ENCODE measurements at regions of chr19 and their contacts with region 1.

Region 1: DNA sequence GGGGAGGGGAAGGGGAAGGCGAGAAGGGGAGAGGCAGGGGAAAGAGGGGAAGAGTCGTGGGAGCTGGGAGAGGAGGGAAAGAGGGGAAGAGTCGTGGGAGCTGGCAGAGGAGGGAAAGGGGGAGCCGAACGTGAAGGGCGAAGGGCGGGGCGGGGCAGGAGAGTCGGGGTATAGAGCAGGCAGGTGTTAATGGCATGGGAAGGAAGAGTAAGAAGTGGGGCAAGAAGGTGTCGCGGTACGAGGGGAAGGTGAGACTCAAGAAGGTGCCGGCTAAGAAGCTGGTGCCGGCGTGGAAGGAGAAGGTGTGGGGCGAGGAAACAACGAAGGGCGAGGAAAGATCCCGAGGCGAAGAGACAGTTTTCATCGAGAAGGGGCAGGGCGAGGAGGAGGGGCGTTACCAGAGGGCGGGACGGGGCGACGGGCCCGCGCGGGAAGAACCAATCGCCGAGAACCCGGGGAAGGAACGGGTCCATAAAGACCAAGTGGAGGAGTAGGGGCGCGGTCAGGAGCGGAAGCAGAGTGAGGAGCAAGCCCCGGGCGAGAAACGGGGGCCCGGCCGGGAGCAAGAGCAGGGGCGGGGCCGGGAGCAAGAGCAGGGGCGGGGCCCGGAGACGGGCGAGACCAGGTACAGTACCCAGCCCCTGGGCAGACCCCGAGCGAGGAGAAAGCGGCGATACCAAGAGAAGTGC is 463 bp downstream of the CATSPERG start:
- DNase-seq: peak; percentile 85 to 97 (median 92)
- ATAC-seq: peak; percentile 63
- H3K4me3 ChIP-seq: peak overlapping the region; percentile 95
- H3K4me3 Mint-ChIP-seq: peak overlapping the region; percentile 93
- H3K27ac ChIP-seq: peak overlapping the region; percentile 84 to 97
- H3K27ac Mint-ChIP-seq: peak overlapping the region; percentile 96
- H3K4me1 ChIP-seq: peaks cover 27% of the 10 kb centered on the region
- H3K4me1 Mint-ChIP-seq: peaks cover 24% of the 10 kb centered on the region
- H3K27me3 ChIP-seq: no peaks in the 10 kb centered on the region
- H3K27me3 Mint-ChIP-seq: no peaks in the 10 kb centered on the region
- CTCF ChIP-seq: no peak

Region 2: GRCh38 chr19:37899966-37900365 is 436.1 kb before region 1 on chr19:
- CTCF ChIA-PET with region 1: interaction called, 8 read pairs
- POLR2A ChIA-PET with region 1: no interaction called
- intact Hi-C with region 1: loop called (anchors 1 to 2 kb)
- DNase-seq: no peak
- ATAC-seq: no peak
- H3K4me3 ChIP-seq: no peak overlapping the region
- H3K4me3 Mint-ChIP-seq: no peak overlapping the region
- H3K27ac ChIP-seq: no peak overlapping the region
- H3K27ac Mint-ChIP-seq: no peak overlapping the region
- H3K4me1 ChIP-seq: no peaks in the 10 kb centered on the region
- H3K4me1 Mint-ChIP-seq: peaks cover 5% of the 10 kb centered on the region
- H3K27me3 ChIP-seq: no peaks in the 10 kb centered on the region
- H3K27me3 Mint-ChIP-seq: no peaks in the 10 kb centered on the region
- CTCF ChIP-seq: no peak

Region 3: GRCh38 chr19:38095411-38096308 is 240.4 kb before region 1 on chr19:
- CTCF ChIA-PET with region 1: no interaction called
- POLR2A ChIA-PET with region 1: no interaction called
- intact Hi-C with region 1: loop called in 1 of 2 experiments (anchors 1 kb)
- DNase-seq: peak; percentile 24 to 73 (median 46)
- ATAC-seq: peak; percentile 51
- H3K4me3 ChIP-seq: no peak overlapping the region
- H3K4me3 Mint-ChIP-seq: no peak overlapping the region
- H3K27ac ChIP-seq: no peak overlapping the region
- H3K27ac Mint-ChIP-seq: no peak overlapping the region
- H3K4me1 ChIP-seq: no peaks in the 10 kb centered on the region
- H3K4me1 Mint-ChIP-seq: peaks cover 8% of the 10 kb centered on the region
- H3K27me3 ChIP-seq: no peaks in the 10 kb centered on the region
- H3K27me3 Mint-ChIP-seq: no peaks in the 10 kb centered on the region
- CTCF ChIP-seq: peak; percentile 75

Region 4: DNA sequence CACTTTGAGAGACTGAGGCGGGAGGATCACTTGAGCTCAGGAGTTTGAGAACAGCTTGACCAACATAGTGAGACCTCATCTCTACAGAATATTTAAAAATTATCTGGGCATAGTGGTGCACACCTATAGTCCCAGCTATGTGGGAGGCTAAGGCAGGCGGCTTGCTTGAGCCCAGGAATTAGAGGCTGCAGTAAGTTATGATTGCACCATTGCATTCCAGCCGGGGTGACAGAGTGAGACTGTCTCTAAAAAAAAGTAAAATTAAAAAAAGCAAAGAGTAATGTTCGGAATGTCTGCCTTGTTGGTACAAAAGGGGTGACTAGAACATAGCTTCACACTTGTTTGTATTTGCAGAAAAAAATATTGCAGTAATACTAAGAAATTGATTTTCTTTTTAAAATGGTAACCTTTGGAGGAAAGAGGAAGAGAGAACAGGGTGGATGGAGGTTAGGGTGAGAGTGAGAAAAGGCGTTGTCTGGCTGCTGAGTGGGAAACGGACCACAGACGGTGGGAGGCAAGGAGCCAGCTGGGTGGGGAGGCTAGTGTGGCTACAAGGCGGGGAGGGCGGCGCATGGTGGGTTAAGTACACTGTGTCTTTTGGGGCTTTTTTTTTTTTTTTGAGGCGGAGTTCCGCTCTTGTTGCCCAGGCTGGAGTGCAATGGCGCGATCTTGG is 90.1 kb before region 1 on chr19:
- CTCF ChIA-PET with region 1: interaction called, 10 read pairs
- POLR2A ChIA-PET with region 1: interaction called, 3 read pairs
- intact Hi-C with region 1: loop called (anchors 1 kb)
- DNase-seq: no peak
- ATAC-seq: no peak
- H3K4me3 ChIP-seq: no peak overlapping the region
- H3K4me3 Mint-ChIP-seq: no peak overlapping the region
- H3K27ac ChIP-seq: no peak overlapping the region
- H3K27ac Mint-ChIP-seq: no peak overlapping the region
- H3K4me1 ChIP-seq: peaks cover 7% of the 10 kb centered on the region
- H3K4me1 Mint-ChIP-seq: peaks cover 4% of the 10 kb centered on the region
- H3K27me3 ChIP-seq: peaks cover 0 to 2% of the 10 kb centered on the region in 2 experiments
- H3K27me3 Mint-ChIP-seq: no peaks in the 10 kb centered on the region
- CTCF ChIP-seq: no peak

Region 5: GRCh38 chr19:38315657-38316476 is 20.2 kb before region 1 on chr19 and contains the start of gene YIF1B:
- CTCF ChIA-PET with region 1: interaction called, 3 read pairs
- POLR2A ChIA-PET with region 1: interaction called, 5 read pairs
- intact Hi-C with region 1: loop called (anchors 1 kb)
- DNase-seq: peak; percentile 90 to 98 (median 94)
- ATAC-seq: peak; percentile 90
- H3K4me3 ChIP-seq: peak within 1 kb of the TSS; percentile 76
- H3K4me3 Mint-ChIP-seq: peak within 1 kb of the TSS; percentile 90
- H3K27ac ChIP-seq: peak within 1 kb of the TSS; percentile 79 to 88
- H3K27ac Mint-ChIP-seq: peak within 1 kb of the TSS; percentile 88
- H3K4me1 ChIP-seq: peaks cover 51% of the 10 kb centered on the region
- H3K4me1 Mint-ChIP-seq: peaks cover 45% of the 10 kb centered on the region
- H3K27me3 ChIP-seq: no peaks in the 10 kb centered on the region
- H3K27me3 Mint-ChIP-seq: no peaks in the 10 kb centered on the region
- CTCF ChIP-seq: no peak
- total RNA-seq, gene YIF1B: 15.9 to 17.1 TPM

Region 6: DNA sequence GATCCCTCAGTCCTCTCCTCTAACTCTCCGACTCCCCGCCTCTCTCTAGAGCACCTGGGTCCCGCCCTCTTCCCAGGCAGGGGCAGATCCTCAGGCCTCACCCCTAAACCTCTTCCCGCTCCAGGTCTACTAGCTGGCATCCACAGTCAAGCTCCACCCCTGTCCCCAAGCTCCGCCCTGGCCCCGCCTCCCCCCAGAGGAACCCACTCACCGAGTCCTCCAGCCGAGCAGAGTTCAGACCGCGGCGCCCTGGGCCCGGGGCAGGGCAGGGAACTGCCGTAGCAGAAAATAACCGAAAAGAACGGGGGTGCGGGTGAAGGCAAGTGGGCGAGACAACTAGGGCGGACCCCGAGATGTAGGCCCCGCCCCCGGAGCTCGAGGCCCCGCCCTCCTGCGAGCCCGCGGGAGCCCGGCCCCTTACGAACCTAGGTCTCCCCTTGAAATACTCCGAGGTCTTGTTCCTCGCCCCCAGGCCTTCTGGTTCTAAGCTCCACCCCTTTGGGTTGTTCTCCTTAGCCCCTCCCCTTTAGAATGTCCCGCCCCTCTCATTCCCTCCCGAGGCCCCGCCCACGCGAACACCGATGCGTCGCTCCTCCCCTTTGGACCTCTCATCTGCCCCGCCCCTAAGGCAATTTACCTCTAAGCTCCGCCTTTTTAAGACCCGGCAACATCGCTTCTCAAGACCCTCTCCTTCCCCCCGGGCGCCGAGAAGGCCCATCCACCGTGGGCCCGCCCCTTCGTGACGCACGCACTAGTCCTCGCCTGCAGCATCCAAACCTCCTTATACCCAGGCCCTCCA is 51.7 kb after region 1 on chr19 and contains the start of gene GGN:
- CTCF ChIA-PET with region 1: interaction called, 11 read pairs
- POLR2A ChIA-PET with region 1: interaction called, 3 read pairs
- intact Hi-C with region 1: loop called in 1 of 2 experiments (anchors 5 kb)
- DNase-seq: peak; percentile 59 to 91 (median 75)
- ATAC-seq: peak; percentile 74
- H3K4me3 ChIP-seq: peak within 1 kb of the TSS; percentile 58
- H3K4me3 Mint-ChIP-seq: peak within 1 kb of the TSS; percentile 94
- H3K27ac ChIP-seq: no peak within 1 kb of the TSS
- H3K27ac Mint-ChIP-seq: peak within 1 kb of the TSS; percentile 70
- H3K4me1 ChIP-seq: peaks cover 44% of the 10 kb centered on the region
- H3K4me1 Mint-ChIP-seq: peaks cover 29% of the 10 kb centered on the region
- H3K27me3 ChIP-seq: peaks cover 17 to 18% of the 10 kb centered on the region in 2 experiments
- H3K27me3 Mint-ChIP-seq: peaks cover 39% of the 10 kb centered on the region
- CTCF ChIP-seq: no peak
- total RNA-seq, gene GGN: 0.17 to 0.19 TPM

Region 7: DNA sequence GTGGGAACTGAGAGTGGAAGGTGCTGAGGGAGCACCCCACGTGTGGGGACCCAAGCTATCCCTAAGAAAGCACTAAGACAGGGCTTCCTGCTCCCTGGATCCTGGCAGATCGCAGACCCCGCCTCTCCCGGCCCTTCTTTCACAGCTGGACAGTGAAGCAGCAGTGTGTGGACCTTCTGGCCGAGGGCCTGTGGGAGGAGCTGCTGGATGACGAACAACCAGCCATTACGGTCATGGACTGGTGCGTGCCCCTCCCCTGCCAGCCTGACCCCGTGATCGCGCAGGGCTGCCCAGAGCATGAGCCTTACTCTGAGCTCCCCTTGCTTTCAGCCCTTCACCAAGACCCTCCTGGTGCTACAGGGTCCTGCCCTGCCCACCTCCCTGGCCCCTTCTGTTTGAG is 862.9 kb after region 1 on chr19:
- CTCF ChIA-PET with region 1: no interaction called
- POLR2A ChIA-PET with region 1: no interaction called
- intact Hi-C with region 1: no loop called
- DNase-seq: no peak
- ATAC-seq: no peak
- H3K4me3 ChIP-seq: no peak overlapping the region
- H3K4me3 Mint-ChIP-seq: no peak overlapping the region
- H3K27ac ChIP-seq: no peak overlapping the region
- H3K27ac Mint-ChIP-seq: no peak overlapping the region
- H3K4me1 ChIP-seq: peaks cover 25% of the 10 kb centered on the region
- H3K4me1 Mint-ChIP-seq: peaks cover 23% of the 10 kb centered on the region
- H3K27me3 ChIP-seq: peaks cover 49 to 74% of the 10 kb centered on the region in 2 experiments
- H3K27me3 Mint-ChIP-seq: peaks cover 88% of the 10 kb centered on the region
- CTCF ChIP-seq: no peak

Measured in CD4-positive, alpha-beta T cell (primary cell).